AG04450 (cell line): ENCODE measurements at regions of chr19 and their contacts with region 1.

Region 1: GRCh38 chr19:54448774-54449700 is at the start of gene LENG8:
- DNase-seq: peak; percentile 95
- H3K4me3 ChIP-seq: peak within 1 kb of the TSS; percentile 97
- H3K27ac ChIP-seq: peak within 1 kb of the TSS; percentile 97
- H3K27me3 ChIP-seq: no peaks in the 10 kb centered on the region
- CTCF ChIP-seq: no peak
- polyA plus RNA-seq, gene LENG8: 16.1 and 25.2 TPM in 2 replicates

Region 2: DNA sequence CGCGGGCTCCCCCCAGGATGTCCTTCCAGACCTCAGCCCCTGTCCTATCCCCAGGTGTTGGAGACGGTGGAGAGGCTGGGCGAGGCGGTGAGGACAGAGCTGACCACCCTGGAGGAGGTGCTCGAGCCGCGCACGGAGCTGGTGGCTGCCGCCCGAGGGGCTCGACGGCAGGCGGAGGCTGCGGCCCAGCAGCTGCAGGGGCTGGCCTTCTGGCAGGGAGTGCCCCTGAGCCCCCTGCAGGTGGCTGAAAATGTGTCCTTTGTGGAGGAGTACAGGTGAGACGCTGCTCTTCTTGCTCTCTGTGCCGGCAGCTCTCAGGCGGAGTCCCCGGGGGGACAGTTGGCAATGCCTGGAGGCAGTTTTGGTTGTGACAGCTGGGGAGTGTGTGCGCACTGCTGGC is 26.9 kb before region 1 on chr19:
- CTCF ChIA-PET with region 1: no interaction called
- POLR2A ChIA-PET with region 1: no interaction called
- DNase-seq: no peak
- H3K4me3 ChIP-seq: no peak overlapping the region
- H3K27ac ChIP-seq: no peak overlapping the region
- H3K27me3 ChIP-seq: peaks cover 36% of the 10 kb centered on the region
- CTCF ChIP-seq: no peak

Region 3: GRCh38 chr19:54463531-54464043 is 14.6 kb after region 1 on chr19 and contains the start of gene LENG9:
- CTCF ChIA-PET with region 1: interaction called, 4 read pairs
- POLR2A ChIA-PET with region 1: interaction called, 87 read pairs
- DNase-seq: peak; percentile 92
- H3K4me3 ChIP-seq: peak within 1 kb of the TSS; percentile 64
- H3K27ac ChIP-seq: peak within 1 kb of the TSS; percentile 89
- H3K27me3 ChIP-seq: no peaks in the 10 kb centered on the region
- CTCF ChIP-seq: no peak
- polyA plus RNA-seq, gene LENG9: 0.63 and 1.3 TPM in 2 replicates

Region 4: DNA sequence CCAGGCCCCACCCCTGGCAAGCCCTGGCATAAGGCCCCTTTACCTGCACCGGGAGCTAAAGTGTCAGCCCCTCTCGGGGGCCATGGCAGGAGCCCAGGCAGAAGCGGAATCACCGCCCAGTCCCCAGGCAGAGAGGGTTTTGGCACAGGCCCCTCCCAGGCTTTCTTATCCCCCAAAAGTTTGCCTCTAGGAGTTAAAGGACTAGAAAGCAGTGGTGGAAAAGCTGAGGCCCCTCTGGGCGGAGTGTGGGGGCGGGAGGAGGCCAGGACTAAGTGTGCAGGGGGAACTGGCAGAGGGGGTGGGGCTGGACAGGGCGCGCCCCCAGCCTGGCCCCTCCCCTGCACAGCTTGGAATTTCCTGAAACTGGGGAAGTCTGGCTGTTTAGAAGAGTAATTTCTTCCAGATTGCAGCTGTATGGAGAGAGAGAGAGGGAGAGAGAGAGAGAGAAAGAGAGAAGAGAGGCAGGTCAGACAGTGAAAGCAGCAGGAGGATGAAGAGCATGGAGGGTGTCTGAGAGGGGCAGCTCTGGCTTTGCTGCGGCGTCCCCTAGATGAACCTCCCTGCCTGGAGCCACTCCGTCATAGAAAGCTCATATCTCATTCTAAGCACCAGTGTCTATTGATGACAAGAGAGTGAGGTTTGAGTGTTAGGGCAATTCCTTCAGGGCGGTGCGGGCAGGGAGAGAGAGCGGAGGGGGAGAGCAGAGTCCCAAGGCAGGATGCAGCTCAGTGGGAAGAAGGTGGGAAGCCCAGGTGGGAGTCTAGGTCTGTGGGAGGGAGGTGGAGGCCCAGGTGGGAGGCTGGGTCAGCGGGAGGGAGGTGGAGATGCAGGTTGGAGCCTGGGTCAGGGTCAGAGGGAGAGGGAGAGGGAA is 24.2 kb after region 1 on chr19 and contains the start of gene CDC42EP5:
- CTCF ChIA-PET with region 1: interaction called, 3 read pairs
- POLR2A ChIA-PET with region 1: interaction called, 19 read pairs
- DNase-seq: peak; percentile 71
- H3K4me3 ChIP-seq: peak within 1 kb of the TSS; percentile 70
- H3K27ac ChIP-seq: peak within 1 kb of the TSS; percentile 82
- H3K27me3 ChIP-seq: no peaks in the 10 kb centered on the region
- CTCF ChIP-seq: no peak
- polyA plus RNA-seq, gene CDC42EP5: 12.3 and 17.7 TPM in 2 replicates